Dendritic cell treated with granulocyte-macrophage colony-stimulating factor and Interleukin-4, amounts not matched to agents 40 ng/mL and 50 ng/mL, for 4 days (primary cell): ENCODE measurements at regions of chr3 and their contacts with region 1.

Region 1: DNA sequence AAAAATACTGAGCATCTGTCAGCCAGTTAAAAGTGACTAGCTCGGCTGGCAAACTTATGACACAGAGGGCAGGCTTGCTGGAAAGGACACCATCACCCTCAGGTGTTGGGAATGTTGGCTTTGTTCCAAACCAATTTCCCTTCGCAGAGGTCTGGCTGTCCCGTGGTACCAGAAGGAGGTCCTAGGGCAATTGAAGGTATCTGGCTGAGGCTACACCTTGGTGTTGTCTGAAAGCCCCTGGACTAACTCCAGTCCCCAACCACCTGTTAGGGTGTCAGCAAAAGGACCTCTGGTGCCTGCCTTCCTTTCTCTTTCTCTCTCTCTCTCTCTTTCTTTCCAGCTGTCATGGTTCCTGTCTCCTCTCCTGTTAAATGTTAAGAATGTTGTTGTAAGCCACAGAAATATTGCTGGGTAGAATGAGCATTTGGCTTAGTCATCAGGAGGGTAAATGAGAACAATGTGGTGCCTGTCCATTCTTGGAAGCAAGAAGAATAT is 12.5 kb downstream of the PRR20G start:
- H3K4me3 Mint-ChIP-seq: no peak overlapping the region
- H3K27ac Mint-ChIP-seq: no peak overlapping the region
- H3K4me1 Mint-ChIP-seq: peaks cover 24% of the 10 kb centered on the region
- H3K27me3 Mint-ChIP-seq: peaks cover 8% of the 10 kb centered on the region

Region 2: GRCh38 chr3:127320536-127321121 is 45.3 kb after region 1 on chr3:
- intact Hi-C with region 1: loop called (anchors 10 kb)
- H3K4me3 Mint-ChIP-seq: no peak overlapping the region
- H3K27ac Mint-ChIP-seq: no peak overlapping the region
- H3K4me1 Mint-ChIP-seq: peaks cover 24% of the 10 kb centered on the region
- H3K27me3 Mint-ChIP-seq: peaks cover 24% of the 10 kb centered on the region